Heart right ventricle (tissue), 16 donors: ENCODE measurements at regions of chr13 and their contacts with region 1.

Region 1: GRCh38 chr13:51502153-51502651 is 49.4 kb upstream of the INTS6 start:
- DNase-seq: no peak
- ATAC-seq: no peak
- H3K4me3 ChIP-seq: no peak overlapping the region
- H3K27ac ChIP-seq: no peak overlapping the region
- H3K4me1 ChIP-seq: peaks cover 0 to 14% (median 0%) of the 10 kb centered on the region in 9 donors
- H3K27me3 ChIP-seq: peaks cover 0 to under 1% (median 0%) of the 10 kb centered on the region in 7 donors
- CTCF ChIP-seq: no peak

Region 2: GRCh38 chr13:51058461-51059167 is 443.6 kb before region 1 on chr13:
- intact Hi-C with region 1: no loop called
- DNase-seq: no peak
- ATAC-seq: no peak
- H3K4me3 ChIP-seq: no peak overlapping the region
- H3K27ac ChIP-seq: no peak overlapping the region
- H3K4me1 ChIP-seq: peaks cover 0 to 3% (median 0%) of the 10 kb centered on the region in 9 donors
- H3K27me3 ChIP-seq: no peaks in the 10 kb centered on the region
- CTCF ChIP-seq: no peak

Region 3: DNA sequence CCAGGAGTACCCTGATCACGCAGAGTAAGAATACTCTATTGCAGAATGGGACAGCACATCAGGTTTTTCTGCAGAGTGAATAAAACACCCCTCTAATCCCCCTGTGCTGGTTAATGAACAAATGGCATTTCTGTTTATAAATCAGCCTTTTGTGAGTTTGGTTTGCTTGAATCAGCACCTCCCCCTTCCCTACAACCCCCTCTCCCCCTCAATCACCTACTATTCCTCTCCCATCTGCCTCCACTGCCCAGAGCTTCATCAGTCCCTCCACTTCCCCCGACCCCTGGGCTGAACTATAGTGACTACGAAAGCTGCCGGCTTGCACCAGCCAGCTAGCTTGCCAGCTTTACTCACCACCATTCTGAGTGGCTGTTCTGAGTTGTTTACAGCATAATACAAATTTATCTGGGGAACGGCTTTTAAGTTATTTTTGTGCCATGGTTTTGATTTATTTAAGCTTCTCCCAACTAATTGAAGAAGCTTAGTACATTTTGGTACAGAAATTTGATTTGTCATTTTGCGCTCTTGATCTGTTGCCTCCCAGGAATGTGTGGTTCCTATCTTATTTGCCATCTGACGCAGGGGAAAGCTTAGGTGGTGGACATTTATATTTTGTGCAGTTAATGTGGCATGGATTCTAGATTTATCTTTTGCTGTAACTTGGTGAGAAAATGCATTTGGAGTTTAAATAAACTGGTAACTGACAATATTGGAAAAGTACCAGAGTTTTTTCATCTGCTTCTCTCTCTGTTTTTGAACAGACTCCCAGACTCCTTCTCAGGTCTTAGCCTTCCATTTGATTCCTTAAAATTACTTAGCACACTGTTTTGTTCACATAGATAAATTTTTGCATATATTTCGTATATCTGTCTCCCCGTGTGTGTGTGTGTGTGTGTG is 40.4 kb after region 1 on chr13:
- intact Hi-C with region 1: loop called in 1 of 10 experiments (anchors 5 kb)
- DNase-seq: no peak
- ATAC-seq: peak in 1 of 8 donors; percentile 42
- H3K4me3 ChIP-seq: no peak overlapping the region
- H3K27ac ChIP-seq: peak overlapping the region in 1 of 10 donors; percentile 10
- H3K4me1 ChIP-seq: peaks cover 0 to 31% (median 5%) of the 10 kb centered on the region in 9 donors
- H3K27me3 ChIP-seq: no peaks in the 10 kb centered on the region
- CTCF ChIP-seq: no peak

Region 4: DNA sequence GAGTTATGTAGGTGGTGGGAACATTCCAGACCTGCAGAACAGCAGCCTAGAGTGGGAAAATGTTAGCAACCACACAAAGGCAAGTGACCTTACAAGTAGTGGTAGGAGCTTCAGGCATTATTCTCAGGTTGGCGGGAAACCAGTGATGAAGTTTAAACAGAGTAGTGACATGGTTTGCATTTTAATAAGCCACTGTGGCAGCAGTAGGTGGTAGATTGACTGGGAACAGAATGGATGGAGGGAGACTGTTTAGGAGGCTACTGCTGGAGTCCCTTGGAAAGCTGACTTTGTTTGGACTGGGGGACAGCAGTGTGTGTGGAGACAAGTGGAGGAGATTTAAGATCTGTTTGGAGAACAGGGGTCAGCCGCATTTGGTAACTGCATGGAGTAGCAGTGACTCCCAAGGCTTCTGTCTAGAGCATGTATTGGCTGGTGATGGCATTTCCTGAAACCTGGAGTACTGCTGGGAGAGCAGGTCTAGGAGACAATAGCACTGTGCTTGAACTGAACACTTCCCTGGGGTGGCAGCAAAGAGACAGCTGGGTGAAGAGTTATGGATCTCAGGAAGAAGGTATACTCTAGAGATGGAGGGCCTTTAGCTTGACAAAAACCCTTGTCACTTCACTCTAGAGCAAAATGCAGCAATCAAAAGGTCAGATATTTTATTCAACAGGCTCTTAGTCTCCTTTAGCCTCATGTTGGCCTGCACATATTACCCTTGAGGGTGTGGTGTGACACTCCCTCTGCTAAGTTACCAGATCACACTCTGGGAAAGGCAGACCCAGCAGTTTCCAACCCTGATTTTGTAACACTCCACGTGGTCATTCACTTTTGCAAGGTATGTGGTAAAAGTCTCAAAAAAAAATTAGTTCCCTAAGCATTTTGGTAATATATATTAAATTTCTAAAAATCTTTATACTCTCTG is 231.4 kb after region 1 on chr13:
- intact Hi-C with region 1: no loop called
- DNase-seq: no peak
- ATAC-seq: no peak
- H3K4me3 ChIP-seq: no peak overlapping the region
- H3K27ac ChIP-seq: no peak overlapping the region
- H3K4me1 ChIP-seq: peaks cover 0 to 32% (median 16%) of the 10 kb centered on the region in 9 donors
- H3K27me3 ChIP-seq: no peaks in the 10 kb centered on the region
- CTCF ChIP-seq: no peak